IMR-90 (cell line): ENCODE measurements at regions of chr20 and their contacts with region 1.

Region 1: DNA sequence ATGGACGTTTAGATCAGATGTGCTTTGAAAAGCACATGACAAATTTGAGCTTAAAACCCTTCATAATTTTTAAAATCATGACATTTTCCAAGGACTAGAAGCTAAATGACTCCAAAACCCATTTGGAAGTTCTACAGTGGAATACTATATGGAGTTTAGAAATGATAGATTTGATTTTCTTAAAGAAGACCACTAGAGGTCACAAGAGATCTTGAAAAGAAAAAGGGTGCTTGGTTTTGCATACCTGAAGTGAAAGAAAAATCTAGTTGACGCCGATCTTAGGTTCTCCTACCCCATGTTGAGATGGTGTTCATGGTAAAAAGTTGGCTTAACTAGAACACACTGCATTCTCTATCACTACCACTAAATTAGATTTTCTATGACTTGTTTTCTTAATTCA is 31.5 kb downstream of the CFAP61 start:
- DNase-seq: peak; percentile 20
- ATAC-seq: peak; percentile 72
- H3K4me3 ChIP-seq: no peak overlapping the region
- H3K27ac ChIP-seq: no peak overlapping the region
- H3K4me1 ChIP-seq: no peaks in the 10 kb centered on the region
- H3K27me3 ChIP-seq: peaks cover 22% of the 10 kb centered on the region
- CTCF ChIP-seq: peak; percentile 53
- POLR2A ChIP-seq: no peak
- RAD21 ChIP-seq: peak; percentile 57

Region 2: DNA sequence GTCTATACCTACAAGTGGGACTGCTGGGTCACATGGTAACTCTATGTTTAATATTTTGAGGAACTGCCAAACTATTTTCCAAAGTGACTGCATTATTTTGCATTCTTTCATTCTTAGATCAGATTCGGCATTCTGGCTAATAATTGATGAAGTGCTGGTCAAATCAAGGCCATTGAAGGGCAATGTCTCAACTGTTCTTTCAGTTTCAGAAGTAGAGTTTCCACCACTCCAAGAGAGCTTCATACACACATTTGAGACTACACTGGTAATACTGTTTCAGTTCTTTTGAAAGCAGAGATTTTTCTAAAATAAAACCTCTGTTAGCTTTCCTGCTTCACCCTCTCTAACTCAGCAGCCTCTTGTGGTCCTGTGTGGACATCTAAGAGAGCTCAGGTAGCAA is 123.0 kb after region 1 on chr20:
- CTCF ChIA-PET with region 1: no interaction called
- POLR2A ChIA-PET with region 1: no interaction called
- dilution Hi-C with region 1: no loop called
- in situ Hi-C with region 1: no loop called
- intact Hi-C with region 1: no loop called
- DNase-seq: no peak
- ATAC-seq: no peak
- H3K4me3 ChIP-seq: no peak overlapping the region
- H3K27ac ChIP-seq: no peak overlapping the region
- H3K4me1 ChIP-seq: no peaks in the 10 kb centered on the region
- H3K27me3 ChIP-seq: no peaks in the 10 kb centered on the region; the same call in none of the 2 replicates
- CTCF ChIP-seq: no peak
- POLR2A ChIP-seq: no peak
- RAD21 ChIP-seq: no peak

Region 3: DNA sequence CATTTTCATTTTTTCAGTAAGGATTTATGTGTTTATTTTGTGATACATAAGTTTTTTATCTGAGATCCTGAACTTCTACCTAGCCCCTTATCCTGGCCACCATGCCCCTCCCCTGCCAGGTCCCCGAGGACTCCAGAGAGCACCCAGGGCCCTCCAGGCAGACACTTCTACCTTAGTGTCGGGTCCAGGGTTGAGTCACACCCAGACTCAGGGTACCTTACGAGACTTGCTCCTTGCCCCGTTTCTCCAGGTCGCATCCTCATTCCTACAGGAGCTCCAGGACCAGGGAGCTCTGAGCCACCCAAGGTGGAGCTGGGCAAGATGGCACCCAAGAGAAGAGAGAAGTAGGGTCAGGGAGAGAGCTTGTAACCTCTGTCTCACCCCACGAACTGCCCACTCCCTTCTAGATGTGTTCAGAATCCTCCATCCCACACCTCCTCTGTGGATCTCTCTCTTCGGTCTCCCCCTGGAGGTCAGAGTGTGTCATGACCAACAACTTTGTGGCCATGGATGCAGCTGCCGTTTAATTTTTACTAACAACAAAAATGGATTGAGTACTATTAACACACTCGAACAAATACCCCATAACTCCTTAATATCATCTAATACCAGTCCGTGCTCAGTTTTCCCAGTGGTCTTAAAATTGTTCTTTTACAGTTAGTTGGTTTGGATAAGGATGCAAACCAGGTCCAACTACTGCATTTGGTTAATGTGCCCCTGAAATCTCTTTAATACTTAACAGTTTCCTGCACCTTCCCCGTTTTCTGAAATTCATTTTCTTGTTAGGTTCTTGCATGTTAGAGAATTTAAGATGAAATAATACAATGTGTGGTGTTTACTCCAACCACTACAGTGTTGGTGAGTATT is 153.5 kb after region 1 on chr20:
- CTCF ChIA-PET with region 1: interaction called, 4 read pairs
- POLR2A ChIA-PET with region 1: no interaction called
- dilution Hi-C with region 1: no loop called
- in situ Hi-C with region 1: loop called (anchors 10 kb)
- intact Hi-C with region 1: loop called (anchors 1 kb)
- DNase-seq: peak; percentile 14
- ATAC-seq: peak; percentile 88
- H3K4me3 ChIP-seq: no peak overlapping the region
- H3K27ac ChIP-seq: no peak overlapping the region
- H3K4me1 ChIP-seq: no peaks in the 10 kb centered on the region
- H3K27me3 ChIP-seq: peaks cover 2% of the 10 kb centered on the region
- CTCF ChIP-seq: peak; percentile 65
- POLR2A ChIP-seq: no peak
- RAD21 ChIP-seq: peak; percentile 49

Region 4: DNA sequence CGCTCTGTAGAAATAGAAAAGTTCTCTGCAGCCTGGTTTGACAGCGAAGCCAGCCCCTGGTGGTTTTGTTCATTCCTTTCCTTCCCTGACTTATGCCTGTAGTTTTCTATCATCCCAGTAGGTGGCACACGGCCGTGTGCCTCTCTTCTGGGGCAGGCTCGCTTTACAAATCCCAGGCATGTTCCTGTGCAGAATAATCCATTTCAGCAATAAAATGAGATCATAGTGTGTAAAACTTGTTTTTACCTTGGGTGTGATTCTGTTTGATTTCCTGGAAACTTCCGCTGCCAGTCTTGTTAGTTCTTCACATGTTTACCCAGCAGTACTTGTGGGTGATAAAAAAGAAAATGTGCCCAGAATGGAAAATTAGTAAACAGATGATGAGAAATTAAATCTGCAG is 276.7 kb after region 1 on chr20:
- CTCF ChIA-PET with region 1: no interaction called
- POLR2A ChIA-PET with region 1: no interaction called
- dilution Hi-C with region 1: no loop called
- in situ Hi-C with region 1: no loop called
- intact Hi-C with region 1: loop called (anchors 2 kb)
- DNase-seq: peak; percentile 69
- ATAC-seq: peak; percentile 98
- H3K4me3 ChIP-seq: no peak overlapping the region
- H3K27ac ChIP-seq: no peak overlapping the region
- H3K4me1 ChIP-seq: no peaks in the 10 kb centered on the region
- H3K27me3 ChIP-seq: peaks cover 47% of the 10 kb centered on the region
- CTCF ChIP-seq: peak; percentile 92
- POLR2A ChIP-seq: no peak
- RAD21 ChIP-seq: peak; percentile 86

Region 5: DNA sequence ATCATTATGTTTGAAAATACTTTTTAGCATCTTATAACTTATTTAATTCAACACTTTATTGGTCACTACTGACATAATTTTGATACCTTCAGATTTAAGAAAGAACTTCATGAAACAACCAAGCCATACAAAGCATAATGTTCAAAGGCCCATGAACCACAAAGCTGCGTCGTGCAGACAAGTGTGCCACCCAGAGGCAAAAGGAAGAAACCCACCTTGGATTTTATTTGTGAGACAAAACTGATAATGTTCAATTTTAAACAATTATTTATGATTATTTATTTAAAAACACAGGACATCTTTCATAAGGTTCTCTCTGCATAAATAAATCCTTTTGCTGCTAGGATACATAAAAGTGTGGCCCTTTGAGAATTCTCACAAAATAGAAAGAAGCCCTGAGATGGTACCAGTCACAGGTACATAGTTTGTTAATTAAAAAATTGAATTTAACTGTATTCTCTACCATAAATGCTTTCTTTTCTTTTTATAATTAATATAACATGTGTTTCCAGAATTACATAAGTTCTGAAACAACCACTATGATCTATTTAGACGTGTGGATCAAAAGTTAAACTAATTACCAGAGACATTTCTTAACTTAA is 484.9 kb after region 1 on chr20:
- CTCF ChIA-PET with region 1: no interaction called
- POLR2A ChIA-PET with region 1: no interaction called
- dilution Hi-C with region 1: no loop called
- in situ Hi-C with region 1: no loop called
- intact Hi-C with region 1: loop called (anchors 1 kb)
- DNase-seq: peak; percentile 58
- ATAC-seq: peak; percentile 82
- H3K4me3 ChIP-seq: no peak overlapping the region
- H3K27ac ChIP-seq: no peak overlapping the region
- H3K4me1 ChIP-seq: no peaks in the 10 kb centered on the region
- H3K27me3 ChIP-seq: no peaks in the 10 kb centered on the region
- CTCF ChIP-seq: peak; percentile 95
- POLR2A ChIP-seq: peak; percentile 41; the same call in 1 of the 2 replicates
- RAD21 ChIP-seq: peak; percentile 97

Region 6: DNA sequence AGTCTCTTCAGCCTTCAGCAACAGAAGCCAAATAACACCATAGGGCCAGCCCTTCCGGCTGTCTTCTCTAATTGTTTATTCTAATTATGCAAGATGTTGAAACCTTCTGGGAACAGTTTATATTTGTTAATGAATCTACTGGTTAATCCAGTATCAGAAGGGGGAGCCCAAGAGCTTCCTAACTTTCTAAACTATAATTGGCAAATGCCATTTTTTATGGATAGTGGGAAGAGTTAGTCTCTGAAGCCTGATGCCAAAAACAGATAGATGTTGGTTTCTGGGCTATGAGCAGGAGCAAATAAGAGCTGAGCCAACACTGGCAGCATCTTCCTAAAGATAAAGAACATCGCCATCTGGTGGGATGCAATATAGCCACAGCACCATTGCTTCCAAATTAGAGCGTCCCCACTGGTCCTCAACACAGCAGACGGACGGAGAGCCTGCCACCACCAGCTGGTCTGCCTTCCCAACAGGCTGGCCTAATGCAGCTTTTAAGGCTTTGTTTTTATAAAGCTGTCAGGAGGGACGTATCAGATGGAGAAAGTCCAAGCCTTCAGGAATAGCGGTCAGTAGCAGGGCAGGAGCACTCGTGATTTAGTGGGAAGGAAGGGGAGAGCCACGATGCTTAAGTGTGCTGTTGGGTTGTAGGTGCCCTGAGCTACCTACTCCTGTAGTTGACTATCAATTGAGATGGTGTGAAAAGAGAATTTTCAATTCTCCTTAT is 509.8 kb after region 1 on chr20:
- CTCF ChIA-PET with region 1: interaction called, 9 read pairs
- POLR2A ChIA-PET with region 1: no interaction called
- dilution Hi-C with region 1: no loop called
- in situ Hi-C with region 1: loop called (anchors 10 kb)
- intact Hi-C with region 1: loop called (anchors 1 kb)
- DNase-seq: peak; percentile 65
- ATAC-seq: peak; percentile 86
- H3K4me3 ChIP-seq: no peak overlapping the region
- H3K27ac ChIP-seq: no peak overlapping the region
- H3K4me1 ChIP-seq: peaks cover 4% of the 10 kb centered on the region
- H3K27me3 ChIP-seq: no peaks in the 10 kb centered on the region
- CTCF ChIP-seq: peak; percentile 56
- POLR2A ChIP-seq: no peak
- RAD21 ChIP-seq: peak; percentile 40

Region 7: DNA sequence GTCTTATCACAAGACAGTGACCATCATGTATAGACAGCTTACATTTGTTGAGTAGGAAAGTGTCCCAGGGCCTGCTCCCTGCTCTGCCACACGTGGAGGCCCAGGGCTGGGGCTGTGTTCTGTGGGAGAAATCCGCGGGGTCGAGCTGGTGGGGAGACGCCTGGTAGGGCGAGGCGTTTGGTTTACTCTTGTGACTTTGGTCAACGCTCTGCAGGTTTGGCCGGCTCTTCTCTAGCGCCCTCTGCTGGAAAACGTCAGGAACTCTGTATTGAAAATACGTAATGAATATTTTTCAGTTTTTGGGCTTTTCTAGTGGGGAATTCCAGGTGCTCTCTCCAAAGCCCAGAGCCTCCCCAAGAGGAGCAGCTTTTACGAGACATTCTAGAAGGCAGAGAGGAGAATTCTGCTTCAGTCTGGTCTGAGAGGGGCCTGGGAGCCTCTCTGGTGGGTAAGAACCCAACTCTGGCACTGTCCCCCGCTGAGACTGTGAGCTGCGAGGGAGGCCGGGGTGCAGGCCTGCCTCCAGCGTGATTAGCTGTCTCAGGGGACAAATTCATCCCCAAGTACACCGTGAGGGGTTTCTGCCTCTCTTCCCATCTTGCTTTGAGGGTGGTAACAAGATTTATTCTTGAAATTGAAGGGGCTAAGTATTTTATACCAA is 741.2 kb after region 1 on chr20:
- CTCF ChIA-PET with region 1: no interaction called
- POLR2A ChIA-PET with region 1: no interaction called
- dilution Hi-C with region 1: no loop called
- in situ Hi-C with region 1: no loop called
- intact Hi-C with region 1: loop called (anchors 10 kb)
- DNase-seq: peak; percentile 2
- ATAC-seq: peak; percentile 53
- H3K4me3 ChIP-seq: no peak overlapping the region
- H3K27ac ChIP-seq: no peak overlapping the region
- H3K4me1 ChIP-seq: no peaks in the 10 kb centered on the region
- H3K27me3 ChIP-seq: no peaks in the 10 kb centered on the region
- CTCF ChIP-seq: peak; percentile 58
- POLR2A ChIP-seq: no peak
- RAD21 ChIP-seq: peak; percentile 36